MCF 10A (cell line): ENCODE measurements at regions of chr2 and their contacts with region 1.

Region 1: DNA sequence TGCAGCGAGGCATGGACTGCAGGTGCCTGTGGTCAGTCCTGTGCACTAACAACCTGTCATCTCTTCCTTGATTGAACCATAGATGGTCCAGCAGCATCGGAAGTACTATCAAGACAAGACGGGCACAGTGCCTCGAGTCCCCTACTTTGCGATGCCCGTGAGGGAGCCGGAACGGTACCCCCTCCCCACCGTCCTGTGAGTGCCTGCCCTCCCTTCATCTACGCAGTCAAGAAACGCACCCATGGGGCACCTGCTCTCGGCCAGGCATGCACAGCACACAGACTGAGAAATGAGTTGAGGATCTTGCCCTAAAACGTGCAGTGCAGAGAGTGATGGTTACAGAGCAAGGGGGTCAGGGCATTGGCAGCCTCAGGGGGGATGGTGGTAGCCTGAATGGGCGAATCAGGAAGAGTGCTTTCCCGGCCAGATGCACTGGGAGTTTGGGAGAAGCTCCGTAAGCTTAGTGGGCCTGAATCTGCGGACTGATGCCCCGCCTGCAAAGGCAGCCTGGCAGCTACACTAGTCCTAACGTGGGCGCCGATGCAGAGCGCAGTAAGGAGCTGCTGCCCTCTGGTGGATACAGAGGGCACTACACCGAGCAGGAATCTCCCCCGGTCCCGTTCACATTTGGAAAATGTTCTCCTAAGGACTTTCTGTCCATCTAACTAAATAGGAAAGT is 63.6 kb downstream of the CIB4 start:
- DNase-seq: peak; percentile 67
- H3K4me3 Mint-ChIP-seq: no peak overlapping the region
- H3K27ac Mint-ChIP-seq: no peak overlapping the region
- H3K4me1 Mint-ChIP-seq: no peaks in the 10 kb centered on the region
- H3K27me3 Mint-ChIP-seq: peaks cover 59% of the 10 kb centered on the region
- CTCF ChIP-seq: peak; percentile 98

Region 2: GRCh38 chr2:26330113-26330549 is 247.4 kb before region 1 on chr2:
- CTCF ChIA-PET with region 1: interaction called, 5 read pairs
- POLR2A ChIA-PET with region 1: no interaction called
- intact Hi-C with region 1: loop called (anchors 5 kb)
- DNase-seq: peak; percentile 81
- H3K4me3 Mint-ChIP-seq: no peak overlapping the region
- H3K27ac Mint-ChIP-seq: no peak overlapping the region
- H3K4me1 Mint-ChIP-seq: peaks cover 14% of the 10 kb centered on the region
- H3K27me3 Mint-ChIP-seq: peaks cover 9% of the 10 kb centered on the region
- CTCF ChIP-seq: peak; percentile 82

Region 3: GRCh38 chr2:26542194-26542455 is 35.4 kb before region 1 on chr2:
- CTCF ChIA-PET with region 1: interaction called, 10 read pairs
- POLR2A ChIA-PET with region 1: no interaction called
- intact Hi-C with region 1: no loop called
- DNase-seq: no peak
- H3K4me3 Mint-ChIP-seq: no peak overlapping the region
- H3K27ac Mint-ChIP-seq: no peak overlapping the region
- H3K4me1 Mint-ChIP-seq: no peaks in the 10 kb centered on the region
- H3K27me3 Mint-ChIP-seq: peaks cover 59% of the 10 kb centered on the region
- CTCF ChIP-seq: no peak

Region 4: GRCh38 chr2:26566081-26566375 is 11.5 kb before region 1 on chr2:
- CTCF ChIA-PET with region 1: interaction called, 10 read pairs
- POLR2A ChIA-PET with region 1: interaction called, 3 read pairs
- intact Hi-C with region 1: no loop called
- DNase-seq: no peak
- H3K4me3 Mint-ChIP-seq: no peak overlapping the region
- H3K27ac Mint-ChIP-seq: no peak overlapping the region
- H3K4me1 Mint-ChIP-seq: peaks cover 8% of the 10 kb centered on the region
- H3K27me3 Mint-ChIP-seq: peaks cover 87% of the 10 kb centered on the region
- CTCF ChIP-seq: no peak

Region 5: GRCh38 chr2:26597197-26597596 is 19.6 kb after region 1 on chr2:
- CTCF ChIA-PET with region 1: interaction called, 12 read pairs
- POLR2A ChIA-PET with region 1: no interaction called
- intact Hi-C with region 1: no loop called
- DNase-seq: peak; percentile 27
- H3K4me3 Mint-ChIP-seq: no peak overlapping the region
- H3K27ac Mint-ChIP-seq: no peak overlapping the region
- H3K4me1 Mint-ChIP-seq: no peaks in the 10 kb centered on the region
- H3K27me3 Mint-ChIP-seq: peaks cover 63% of the 10 kb centered on the region
- CTCF ChIP-seq: no peak